OCI-LY7 (cell line): ENCODE measurements at regions of chr7 and their contacts with region 1.

Region 1: DNA sequence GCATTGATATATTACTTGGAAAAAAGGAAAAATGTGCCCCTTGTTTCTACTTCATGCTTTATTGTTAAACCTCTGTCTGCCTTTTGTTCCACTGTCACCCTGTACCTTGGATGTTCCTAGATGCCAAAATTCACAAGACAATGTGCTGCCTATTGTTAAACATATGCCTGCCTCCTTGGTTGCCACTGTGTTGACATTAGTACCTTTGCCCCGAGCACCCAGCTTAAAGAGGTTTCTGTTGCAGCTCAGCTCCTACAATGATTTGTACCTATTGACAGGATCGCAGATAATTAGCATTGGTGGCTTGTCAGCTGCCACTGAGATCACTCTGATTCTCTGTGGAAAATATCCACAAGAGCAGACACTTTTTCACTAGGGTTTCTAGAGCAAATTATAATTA is 188.0 kb downstream of the KCND2 start:
- DNase-seq: no peak
- H3K4me3 ChIP-seq: no peak overlapping the region
- H3K27ac ChIP-seq: no peak overlapping the region
- H3K4me1 ChIP-seq: no peaks in the 10 kb centered on the region
- CTCF ChIP-seq: no peak

Region 2: DNA sequence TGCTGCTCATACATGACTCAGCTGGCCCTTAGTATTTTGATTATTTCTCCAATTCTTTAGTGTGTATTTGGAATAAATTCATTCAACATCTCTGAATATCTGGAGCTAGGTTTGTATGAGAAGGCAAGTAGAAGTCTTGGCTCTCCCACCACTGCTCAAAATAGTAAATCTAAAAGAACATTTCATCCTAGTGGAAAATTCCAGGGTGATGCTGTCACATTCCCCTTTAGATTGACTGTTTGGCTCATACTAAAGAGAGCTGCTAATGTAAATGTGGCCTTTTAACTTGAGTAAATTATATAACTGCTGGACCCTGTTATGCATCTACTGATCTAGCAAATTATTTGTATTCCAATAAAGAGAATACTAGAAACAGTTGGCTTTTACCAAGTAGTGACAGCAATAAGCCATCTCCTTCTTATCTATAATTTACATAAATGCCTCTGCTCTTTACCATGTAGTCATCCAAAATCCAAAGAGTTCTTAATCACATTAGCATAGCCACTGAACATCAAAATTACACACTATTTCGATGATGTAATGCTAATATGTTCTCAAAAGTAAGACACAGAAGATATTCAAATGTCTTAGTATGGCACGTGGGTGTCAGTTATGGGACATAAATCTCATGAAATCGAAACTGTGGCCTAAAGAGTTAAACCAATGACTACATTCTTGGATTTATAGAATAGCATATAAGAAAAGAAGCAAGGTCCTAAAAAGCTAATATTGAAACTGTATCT is 274.8 kb before region 1 on chr7:
- CTCF ChIA-PET with region 1: no interaction called
- POLR2A ChIA-PET with region 1: no interaction called
- intact Hi-C with region 1: no loop called
- DNase-seq: no peak
- H3K4me3 ChIP-seq: no peak overlapping the region
- H3K27ac ChIP-seq: no peak overlapping the region
- H3K4me1 ChIP-seq: no peaks in the 10 kb centered on the region
- CTCF ChIP-seq: no peak

Region 3: GRCh38 chr7:120360918-120361317 is 100.0 kb before region 1 on chr7:
- CTCF ChIA-PET with region 1: interaction called, 12 read pairs
- POLR2A ChIA-PET with region 1: no interaction called
- intact Hi-C with region 1: no loop called
- DNase-seq: no peak
- H3K4me3 ChIP-seq: no peak overlapping the region
- H3K27ac ChIP-seq: no peak overlapping the region
- H3K4me1 ChIP-seq: no peaks in the 10 kb centered on the region
- CTCF ChIP-seq: no peak

Region 4: GRCh38 chr7:121032645-121033460 is 571.9 kb after region 1 on chr7:
- CTCF ChIA-PET with region 1: no interaction called
- POLR2A ChIA-PET with region 1: no interaction called
- intact Hi-C with region 1: no loop called
- DNase-seq: no peak
- H3K4me3 ChIP-seq: no peak overlapping the region
- H3K27ac ChIP-seq: no peak overlapping the region
- H3K4me1 ChIP-seq: no peaks in the 10 kb centered on the region
- CTCF ChIP-seq: no peak